Endothelial cell of umbilical vein (primary cell): ENCODE measurements at regions of chr6 and their contacts with region 1.

Region 1: DNA sequence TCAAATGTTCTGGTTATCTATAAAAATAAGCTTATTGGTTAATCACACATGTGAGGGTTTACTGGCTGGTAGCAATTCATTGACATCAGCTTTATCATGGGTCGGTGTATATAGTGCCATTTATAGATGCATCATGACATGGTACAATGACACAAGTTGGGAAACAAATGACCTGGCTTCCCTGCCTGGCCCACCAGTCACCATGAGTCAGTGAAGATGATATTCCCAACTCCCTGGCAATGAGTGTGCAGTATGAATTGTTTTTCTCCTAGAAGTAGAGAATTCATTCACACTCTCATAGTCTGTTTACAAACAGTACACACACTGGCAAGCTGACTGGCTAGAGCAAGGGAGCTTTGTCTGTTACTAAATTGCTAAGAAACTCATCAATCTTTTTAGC is 37.2 kb upstream of the CALHM6 start:
- DNase-seq: no peak
- H3K4me3 ChIP-seq: no peak overlapping the region
- H3K27ac ChIP-seq: no peak overlapping the region
- H3K4me1 ChIP-seq: no peaks in the 10 kb centered on the region
- H3K27me3 ChIP-seq: no peaks in the 10 kb centered on the region
- CTCF ChIP-seq: no peak
- POLR2A ChIP-seq: no peak

Region 2: DNA sequence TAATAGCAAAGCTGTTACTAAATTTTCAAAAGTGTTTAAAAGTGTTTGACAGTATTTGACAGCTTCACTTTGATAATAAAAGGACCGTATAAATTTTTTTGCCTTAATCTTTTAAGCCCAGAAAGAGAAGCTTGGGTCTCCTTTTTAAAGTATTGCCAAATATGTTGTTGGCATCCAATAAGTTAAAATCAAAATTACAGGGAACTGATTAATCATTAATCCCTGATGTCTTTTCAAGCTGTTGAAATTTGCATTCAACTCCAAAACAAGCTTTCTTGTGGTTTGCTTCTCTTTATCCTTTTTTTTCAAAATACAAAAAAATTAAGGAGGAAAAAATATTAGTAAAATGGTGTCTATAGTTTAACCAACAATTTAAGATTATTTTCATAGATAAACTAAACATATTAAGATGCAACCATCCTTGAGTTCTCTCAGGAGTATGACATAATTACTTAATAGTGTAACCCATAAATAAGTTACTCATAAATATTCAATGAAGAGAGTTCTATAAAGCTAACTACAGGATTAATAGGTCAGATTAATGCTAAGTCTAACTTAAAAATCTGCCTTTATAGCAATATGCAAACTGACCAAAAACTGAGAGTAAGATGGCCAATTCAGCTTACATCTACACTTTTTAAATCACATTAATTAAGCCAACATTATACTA is 10.2 kb after region 1 on chr6:
- CTCF ChIA-PET with region 1: interaction called, 13 read pairs
- POLR2A ChIA-PET with region 1: no interaction called
- dilution Hi-C with region 1: no loop called
- intact Hi-C with region 1: no loop called
- DNase-seq: no peak
- H3K4me3 ChIP-seq: no peak overlapping the region
- H3K27ac ChIP-seq: no peak overlapping the region
- H3K4me1 ChIP-seq: no peaks in the 10 kb centered on the region
- H3K27me3 ChIP-seq: no peaks in the 10 kb centered on the region
- CTCF ChIP-seq: no peak
- POLR2A ChIP-seq: no peak